MCF 10A (cell line): ENCODE measurements at regions of chr16 and their contacts with region 1.

Region 1: GRCh38 chr16:80526425-80527061 is 14.2 kb upstream of the DYNLRB2 start:
- DNase-seq: peak; percentile 74
- H3K4me3 Mint-ChIP-seq: no peak overlapping the region
- H3K27ac Mint-ChIP-seq: no peak overlapping the region
- H3K4me1 Mint-ChIP-seq: no peaks in the 10 kb centered on the region
- H3K27me3 Mint-ChIP-seq: peaks cover 18% of the 10 kb centered on the region
- CTCF ChIP-seq: peak; percentile 88

Region 2: GRCh38 chr16:80540516-80541272 is 14.2 kb after region 1 on chr16 and contains the start of gene DYNLRB2:
- CTCF ChIA-PET with region 1: interaction called, 16 read pairs
- POLR2A ChIA-PET with region 1: no interaction called
- intact Hi-C with region 1: no loop called
- DNase-seq: peak; percentile 74
- H3K4me3 Mint-ChIP-seq: peak within 1 kb of the TSS; percentile 84
- H3K27ac Mint-ChIP-seq: peak within 1 kb of the TSS; percentile 94
- H3K4me1 Mint-ChIP-seq: peaks cover 5% of the 10 kb centered on the region
- H3K27me3 Mint-ChIP-seq: no peaks in the 10 kb centered on the region
- CTCF ChIP-seq: no peak
- total RNA-seq, gene DYNLRB2: not detected in 2 replicates

Region 3: GRCh38 chr16:80824718-80825364 is 298.3 kb after region 1 on chr16:
- CTCF ChIA-PET with region 1: interaction called, 19 read pairs
- POLR2A ChIA-PET with region 1: no interaction called
- intact Hi-C with region 1: loop called (anchors 1 kb)
- DNase-seq: peak; percentile 57
- H3K4me3 Mint-ChIP-seq: no peak overlapping the region
- H3K27ac Mint-ChIP-seq: no peak overlapping the region
- H3K4me1 Mint-ChIP-seq: no peaks in the 10 kb centered on the region
- H3K27me3 Mint-ChIP-seq: peaks cover 32% of the 10 kb centered on the region
- CTCF ChIP-seq: peak; percentile 73

Region 4: DNA sequence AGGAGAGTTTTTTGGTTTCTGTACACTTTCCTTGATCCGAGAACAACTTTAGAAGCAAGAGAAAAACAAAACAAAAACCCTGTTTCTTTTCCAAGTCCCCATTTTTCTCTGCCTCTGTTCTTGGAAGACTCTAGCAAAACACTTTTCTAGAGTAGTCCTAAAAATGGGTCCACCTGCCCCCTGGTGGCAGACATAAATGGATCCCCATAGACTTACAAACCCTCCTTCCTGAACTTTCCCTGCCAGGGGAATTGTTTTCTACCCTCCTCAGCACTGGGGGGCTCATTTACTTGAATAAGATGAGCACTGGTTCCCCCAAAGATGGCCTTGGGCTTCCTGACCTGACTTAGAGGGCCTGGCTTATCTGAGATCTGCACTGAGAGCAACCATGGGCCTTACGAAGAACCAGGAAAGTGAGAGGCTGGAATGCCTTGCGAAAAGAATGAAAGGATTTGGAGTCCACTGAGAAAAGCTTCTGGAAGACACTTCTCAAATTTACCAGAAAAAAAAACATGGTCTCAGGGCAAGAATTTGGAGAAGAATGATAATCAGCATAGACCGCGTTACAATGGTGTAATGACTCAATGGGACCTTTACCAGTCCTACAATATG is 325.8 kb after region 1 on chr16:
- CTCF ChIA-PET with region 1: no interaction called
- POLR2A ChIA-PET with region 1: no interaction called
- intact Hi-C with region 1: loop called (anchors 1 kb)
- DNase-seq: peak; percentile 38
- H3K4me3 Mint-ChIP-seq: no peak overlapping the region
- H3K27ac Mint-ChIP-seq: no peak overlapping the region
- H3K4me1 Mint-ChIP-seq: no peaks in the 10 kb centered on the region
- H3K27me3 Mint-ChIP-seq: peaks cover 5% of the 10 kb centered on the region
- CTCF ChIP-seq: peak; percentile 31